H1 (cell line): ENCODE measurements at regions of chr5 and their contacts with region 1.

Region 1: GRCh38 chr5:144203750-144204596 is 33.3 kb downstream of the KCTD16 start:
- DNase-seq: peak in 1 of 2 experiments; percentile 49
- H3K4me3 ChIP-seq: 0 out of 8 replicates have a peak overlapping the region, but pooled peaks of 1 of the 4 experiments have one; percentile 69
- H3K27ac ChIP-seq: no peak overlapping the region
- H3K4me1 ChIP-seq: peaks cover 0 to 3% (median 0%) of the 10 kb centered on the region in 4 experiments; a peak in 2 of 7 replicates
- H3K27me3 ChIP-seq: peaks cover 0 to 10% (median 4%) of the 10 kb centered on the region in 4 experiments; a peak in 3 of 7 replicates
- CTCF ChIP-seq: peak in 2 of 3 experiments; percentile 67 to 79; a peak in 3 of 4 replicates
- EP300 ChIP-seq: no peak
- POLR2A ChIP-seq: no peak
- RAD21 ChIP-seq: peak; percentile 92 to 93

Region 2: DNA sequence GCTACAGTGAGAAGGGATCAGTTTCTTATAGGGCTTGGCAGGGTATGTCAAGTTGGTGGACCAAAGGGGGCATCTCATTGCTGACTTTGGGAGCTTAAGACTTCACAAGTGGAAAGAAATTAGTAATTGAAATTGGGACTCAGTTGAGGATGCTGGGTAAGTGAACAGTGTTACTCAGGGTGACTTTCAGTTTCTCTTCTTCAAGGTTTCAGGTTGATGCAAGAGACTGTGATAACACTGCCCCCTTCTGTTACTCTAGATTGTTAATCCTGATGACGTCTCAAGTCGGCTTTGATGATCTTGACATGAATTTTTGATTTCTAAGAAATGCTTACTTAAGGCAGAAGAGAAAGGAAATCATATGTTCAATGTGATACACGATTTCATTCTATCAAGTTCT is 12.0 kb before region 1 on chr5:
- CTCF ChIA-PET with region 1: interaction called, 33 read pairs
- POLR2A ChIA-PET with region 1: no interaction called
- DNase-seq: no peak
- H3K4me3 ChIP-seq: no peak overlapping the region
- H3K27ac ChIP-seq: no peak overlapping the region
- H3K4me1 ChIP-seq: peaks cover 0 to 2% (median 0%) of the 10 kb centered on the region in 4 experiments; a peak in 1 of 7 replicates
- H3K27me3 ChIP-seq: no peaks in the 10 kb centered on the region
- CTCF ChIP-seq: peak in 2 of 3 experiments; percentile 37 to 62; a peak in 2 of 4 replicates
- EP300 ChIP-seq: no peak
- POLR2A ChIP-seq: no peak
- RAD21 ChIP-seq: peak; percentile 60 to 67

Region 3: DNA sequence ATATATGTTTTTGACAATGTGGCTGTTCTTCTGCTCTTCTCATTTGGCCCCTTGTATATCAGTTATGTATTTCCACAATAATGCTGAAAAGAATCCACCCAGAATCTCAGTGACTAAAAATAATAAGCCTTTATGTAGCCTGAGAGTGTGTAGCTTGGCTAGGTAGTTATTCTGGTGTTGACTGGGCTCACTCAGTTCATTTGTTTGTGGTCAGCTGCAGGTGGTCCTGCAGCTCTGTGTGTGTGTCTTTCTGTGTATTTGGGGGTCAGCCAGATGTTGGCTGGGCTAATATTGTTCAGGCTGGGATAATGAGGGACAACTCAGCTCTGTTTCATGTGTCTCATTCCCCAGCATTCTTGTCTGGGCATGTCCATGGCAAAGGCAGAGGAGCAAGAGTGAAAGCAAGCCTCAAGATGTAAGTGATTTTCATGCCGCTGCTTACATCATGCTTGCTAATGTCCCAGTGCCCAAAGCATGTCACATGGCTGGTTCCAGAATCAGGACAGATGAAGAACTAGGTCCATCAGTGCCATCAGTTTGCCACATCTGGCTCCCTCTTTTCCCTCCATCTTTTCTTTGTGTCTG is 129.5 kb after region 1 on chr5:
- CTCF ChIA-PET with region 1: interaction called, 15 read pairs
- POLR2A ChIA-PET with region 1: no interaction called
- DNase-seq: no peak
- H3K4me3 ChIP-seq: no peak overlapping the region
- H3K27ac ChIP-seq: no peak overlapping the region
- H3K4me1 ChIP-seq: no peaks in the 10 kb centered on the region
- H3K27me3 ChIP-seq: no peaks in the 10 kb centered on the region
- CTCF ChIP-seq: no peak
- EP300 ChIP-seq: no peak
- POLR2A ChIP-seq: no peak
- RAD21 ChIP-seq: no peak

Region 4: DNA sequence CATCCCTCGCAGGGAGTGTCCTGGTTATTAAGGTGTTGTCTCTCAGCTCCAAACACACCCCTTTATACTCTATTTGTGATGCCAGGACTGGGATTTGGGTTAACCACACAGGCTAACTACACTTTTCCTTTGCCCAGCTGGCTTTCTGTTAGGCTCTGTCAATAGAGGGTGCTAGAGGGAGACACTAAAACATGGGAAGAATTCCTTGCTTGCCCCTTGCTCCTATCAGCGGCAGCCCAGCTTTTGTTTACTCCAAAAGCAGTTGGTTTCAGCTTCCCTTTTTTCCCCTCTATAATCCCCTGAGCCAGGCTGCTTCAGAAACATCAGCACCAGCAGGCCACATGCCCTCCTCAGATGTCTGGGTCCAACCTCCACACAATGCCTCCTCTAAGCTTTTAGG is 263.8 kb after region 1 on chr5:
- CTCF ChIA-PET with region 1: interaction called, 14 read pairs
- POLR2A ChIA-PET with region 1: no interaction called
- DNase-seq: peak in 1 of 2 experiments; percentile 56
- H3K4me3 ChIP-seq: no peak overlapping the region
- H3K27ac ChIP-seq: no peak overlapping the region
- H3K4me1 ChIP-seq: peaks cover 0 to 3% (median 0%) of the 10 kb centered on the region in 4 experiments; a peak in 1 of 7 replicates
- H3K27me3 ChIP-seq: no peaks in the 10 kb centered on the region
- CTCF ChIP-seq: peak in 2 of 3 experiments; percentile 61 to 79; a peak in 3 of 4 replicates
- EP300 ChIP-seq: no peak
- POLR2A ChIP-seq: no peak
- RAD21 ChIP-seq: peak; percentile 69 to 79

Region 5: DNA sequence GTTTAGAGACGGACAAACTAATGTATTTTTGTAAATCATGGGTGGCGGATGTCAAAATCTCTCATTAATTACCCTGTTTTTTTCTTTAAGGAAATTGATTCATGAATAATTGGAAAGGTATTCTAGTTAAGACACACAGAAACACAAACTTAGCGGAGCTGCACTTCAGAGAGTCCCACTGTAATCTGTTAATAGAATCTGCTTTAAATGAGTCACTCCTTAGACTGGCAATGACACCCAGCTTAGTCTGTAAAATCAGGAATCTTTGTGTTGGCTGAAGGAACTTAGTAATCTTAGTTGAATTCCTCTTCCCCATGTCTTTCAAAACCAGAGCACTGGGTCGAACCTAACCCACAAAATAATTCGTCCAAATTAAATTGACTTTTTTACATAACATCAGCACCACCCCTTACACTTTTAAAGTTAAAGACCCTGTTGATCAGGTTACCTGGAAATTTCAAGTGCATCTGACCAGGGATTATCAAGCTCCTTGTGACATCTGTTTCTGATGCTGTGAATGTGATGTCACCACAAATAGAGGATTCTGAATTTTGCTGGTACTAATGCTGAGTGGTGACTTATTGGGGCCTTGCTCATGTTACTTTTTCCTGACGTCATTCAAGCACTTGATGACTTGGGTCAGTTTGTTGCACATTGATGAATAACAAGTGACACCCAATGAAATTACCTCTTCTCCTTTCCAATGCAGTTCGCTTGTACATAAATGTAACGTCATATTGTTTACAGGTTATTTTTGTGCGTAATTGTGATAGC is 280.3 kb after region 1 on chr5:
- CTCF ChIA-PET with region 1: interaction called, 12 read pairs
- POLR2A ChIA-PET with region 1: no interaction called
- DNase-seq: no peak
- H3K4me3 ChIP-seq: no peak overlapping the region
- H3K27ac ChIP-seq: no peak overlapping the region
- H3K4me1 ChIP-seq: peaks cover 0 to 14% (median 10%) of the 10 kb centered on the region in 4 experiments; a peak in 5 of 7 replicates
- H3K27me3 ChIP-seq: no peaks in the 10 kb centered on the region
- CTCF ChIP-seq: no peak
- EP300 ChIP-seq: no peak
- POLR2A ChIP-seq: no peak
- RAD21 ChIP-seq: no peak

Region 6: GRCh38 chr5:145237843-145238242 is 1033.9 kb after region 1 on chr5:
- CTCF ChIA-PET with region 1: interaction called, 10 read pairs
- POLR2A ChIA-PET with region 1: no interaction called
- DNase-seq: peak; percentile 46 to 68
- H3K4me3 ChIP-seq: no peak overlapping the region
- H3K27ac ChIP-seq: no peak overlapping the region
- H3K4me1 ChIP-seq: peaks cover 0 to 10% (median 0%) of the 10 kb centered on the region in 4 experiments; a peak in 2 of 7 replicates
- H3K27me3 ChIP-seq: no peaks in the 10 kb centered on the region
- CTCF ChIP-seq: peak in 2 of 3 experiments; percentile 69 to 81; a peak in 3 of 4 replicates
- EP300 ChIP-seq: no peak
- POLR2A ChIP-seq: no peak
- RAD21 ChIP-seq: peak; percentile 94 to 96